ENCODE measurements at regions of chr6 and their contacts with region 1.

Region 1: GRCh38 chr6:35240840-35241801 is 18.4 kb upstream of the ZNF76 start:
- H3K4me3 ChIP-seq: no peak overlapping the region
- H3K27ac ChIP-seq: no peak overlapping the region
- H3K4me1 ChIP-seq: no peaks in the 10 kb centered on the region
- CTCF ChIP-seq: peak; percentile 96

Region 2: GRCh38 chr6:35139908-35140655 is 101.0 kb before region 1 on chr6:
- CTCF ChIA-PET with region 1: interaction called, 191 read pairs
- POLR2A ChIA-PET with region 1: interaction called, 4 read pairs
- H3K4me3 ChIP-seq: no peak overlapping the region
- H3K27ac ChIP-seq: no peak overlapping the region
- H3K4me1 ChIP-seq: peaks cover 2% of the 10 kb centered on the region; the same call in 1 of the 2 replicates
- CTCF ChIP-seq: peak; percentile 70

Region 3: GRCh38 chr6:35181933-35182612 is 59.0 kb before region 1 on chr6:
- CTCF ChIA-PET with region 1: interaction called, 16 read pairs
- POLR2A ChIA-PET with region 1: no interaction called
- H3K4me3 ChIP-seq: peak overlapping the region; percentile 9
- H3K27ac ChIP-seq: peak overlapping the region; percentile 40; the same call in 1 of the 2 replicates
- H3K4me1 ChIP-seq: peaks cover 8% of the 10 kb centered on the region
- CTCF ChIP-seq: no peak

Region 4: GRCh38 chr6:35224720-35225119 is 16.4 kb before region 1 on chr6:
- CTCF ChIA-PET with region 1: interaction called, 50 read pairs
- POLR2A ChIA-PET with region 1: no interaction called
- H3K4me3 ChIP-seq: no peak overlapping the region
- H3K27ac ChIP-seq: no peak overlapping the region
- H3K4me1 ChIP-seq: peaks cover 7% of the 10 kb centered on the region
- CTCF ChIP-seq: no peak

Region 5: GRCh38 chr6:35253249-35253648 is 12.1 kb after region 1 on chr6:
- CTCF ChIA-PET with region 1: interaction called, 64 read pairs
- POLR2A ChIA-PET with region 1: interaction called, 3 read pairs
- H3K4me3 ChIP-seq: no peak overlapping the region
- H3K27ac ChIP-seq: no peak overlapping the region
- H3K4me1 ChIP-seq: no peaks in the 10 kb centered on the region
- CTCF ChIP-seq: no peak

Measured in HEK293 (cell line).